PC-3 (cell line): ENCODE measurements at regions of chr5 and their contacts with region 1.

Region 1: GRCh38 chr5:64784451-64785025 is 15.8 kb downstream of the CWC27 start:
- DNase-seq: peak; percentile 75
- ATAC-seq: peak; percentile 58; the same call in 1 of the 2 replicates
- H3K4me3 ChIP-seq: no peak overlapping the region
- H3K27ac ChIP-seq: no peak overlapping the region
- H3K4me1 ChIP-seq: no peaks in the 10 kb centered on the region
- H3K27me3 ChIP-seq: no peaks in the 10 kb centered on the region
- CTCF ChIP-seq: peak; percentile 79

Region 2: DNA sequence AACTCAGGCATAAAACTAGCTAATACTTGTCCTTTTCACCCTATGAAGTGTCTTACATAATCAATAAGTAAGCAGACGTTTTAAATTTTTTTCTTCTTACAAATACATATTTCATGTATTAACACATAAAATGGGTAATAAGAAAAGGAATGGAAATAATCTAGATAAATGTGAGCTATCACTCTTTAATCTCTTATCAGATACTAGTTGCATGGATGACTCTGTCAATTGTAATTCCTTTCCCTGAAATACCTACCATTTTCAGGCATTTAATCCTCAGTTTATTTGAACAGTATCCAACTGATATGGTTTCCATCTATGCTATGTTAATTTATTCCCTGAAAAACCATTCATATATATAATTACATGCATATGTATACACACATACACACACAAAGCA is 444.8 kb before region 1 on chr5:
- CTCF ChIA-PET with region 1: no interaction called
- POLR2A ChIA-PET with region 1: no interaction called
- intact Hi-C with region 1: no loop called
- DNase-seq: peak; percentile 28
- ATAC-seq: no peak
- H3K4me3 ChIP-seq: no peak overlapping the region
- H3K27ac ChIP-seq: no peak overlapping the region
- H3K4me1 ChIP-seq: peaks cover 12% of the 10 kb centered on the region
- H3K27me3 ChIP-seq: no peaks in the 10 kb centered on the region
- CTCF ChIP-seq: no peak

Region 3: DNA sequence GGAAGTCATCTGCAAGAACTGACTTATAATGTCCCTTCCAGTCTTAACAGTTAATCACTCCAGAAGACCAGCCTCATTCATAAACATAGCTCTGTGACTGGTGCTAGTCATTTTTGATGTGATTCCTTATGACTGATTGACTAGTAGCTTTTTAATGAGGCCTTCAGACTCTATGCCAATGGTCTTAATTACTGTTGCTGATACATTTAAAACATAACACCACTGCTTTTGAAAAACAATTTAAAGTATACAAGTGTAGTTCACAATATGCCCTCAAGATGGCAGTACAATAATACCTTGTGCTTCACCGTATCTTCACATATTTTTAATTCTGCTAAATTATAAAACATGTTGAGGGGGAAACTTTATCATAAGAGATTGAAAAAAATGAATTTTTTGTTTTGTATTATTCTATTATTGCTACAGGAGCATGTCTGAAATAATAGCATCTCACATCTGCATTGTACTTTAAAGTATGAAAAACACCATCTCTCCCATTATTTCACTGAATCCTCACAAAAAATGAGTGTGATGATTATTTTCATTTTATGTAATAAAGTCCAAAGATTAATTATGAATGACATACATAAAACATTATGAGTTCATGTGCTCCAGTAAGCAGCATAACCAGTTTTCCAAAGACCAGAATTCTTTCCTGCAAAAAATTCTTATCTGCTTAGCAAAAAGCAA is 149.4 kb before region 1 on chr5:
- CTCF ChIA-PET with region 1: no interaction called
- POLR2A ChIA-PET with region 1: no interaction called
- intact Hi-C with region 1: loop called (anchors 1 kb)
- DNase-seq: peak; percentile 54
- ATAC-seq: no peak
- H3K4me3 ChIP-seq: no peak overlapping the region
- H3K27ac ChIP-seq: no peak overlapping the region
- H3K4me1 ChIP-seq: no peaks in the 10 kb centered on the region
- H3K27me3 ChIP-seq: no peaks in the 10 kb centered on the region
- CTCF ChIP-seq: peak; percentile 79

Region 4: GRCh38 chr5:64700765-64701164 is 83.8 kb before region 1 on chr5:
- CTCF ChIA-PET with region 1: no interaction called
- POLR2A ChIA-PET with region 1: no interaction called
- intact Hi-C with region 1: loop called (anchors 5 kb)
- DNase-seq: no peak
- ATAC-seq: no peak
- H3K4me3 ChIP-seq: no peak overlapping the region
- H3K27ac ChIP-seq: no peak overlapping the region
- H3K4me1 ChIP-seq: peaks cover 8% of the 10 kb centered on the region; the same call in 1 of the 2 replicates
- H3K27me3 ChIP-seq: no peaks in the 10 kb centered on the region
- CTCF ChIP-seq: no peak